OCI-LY7 (cell line): ENCODE measurements at regions of chr10 and their contacts with region 1.

Region 1: GRCh38 chr10:86389441-86390193 is 23.0 kb upstream of the GRID1 start:
- DNase-seq: peak; percentile 85
- H3K4me3 ChIP-seq: peak overlapping the region; percentile 76
- H3K27ac ChIP-seq: peak overlapping the region; percentile 95
- H3K4me1 ChIP-seq: peaks cover 60% of the 10 kb centered on the region
- CTCF ChIP-seq: peak; percentile 61

Region 2: GRCh38 chr10:86366033-86366901 is 23.4 kb before region 1 on chr10 and contains the start of gene GRID1:
- CTCF ChIA-PET with region 1: no interaction called
- POLR2A ChIA-PET with region 1: interaction called, 3 read pairs
- intact Hi-C with region 1: loop called (anchors 2 kb)
- DNase-seq: peak; percentile 55
- H3K4me3 ChIP-seq: peak within 1 kb of the TSS; percentile 62
- H3K27ac ChIP-seq: no peak within 1 kb of the TSS
- H3K4me1 ChIP-seq: peaks cover 3% of the 10 kb centered on the region
- CTCF ChIP-seq: peak; percentile 35; the same call in 1 of the 2 replicates
- total RNA-seq, gene GRID1: 0.75 and 1.6 TPM in 2 replicates

Region 3: DNA sequence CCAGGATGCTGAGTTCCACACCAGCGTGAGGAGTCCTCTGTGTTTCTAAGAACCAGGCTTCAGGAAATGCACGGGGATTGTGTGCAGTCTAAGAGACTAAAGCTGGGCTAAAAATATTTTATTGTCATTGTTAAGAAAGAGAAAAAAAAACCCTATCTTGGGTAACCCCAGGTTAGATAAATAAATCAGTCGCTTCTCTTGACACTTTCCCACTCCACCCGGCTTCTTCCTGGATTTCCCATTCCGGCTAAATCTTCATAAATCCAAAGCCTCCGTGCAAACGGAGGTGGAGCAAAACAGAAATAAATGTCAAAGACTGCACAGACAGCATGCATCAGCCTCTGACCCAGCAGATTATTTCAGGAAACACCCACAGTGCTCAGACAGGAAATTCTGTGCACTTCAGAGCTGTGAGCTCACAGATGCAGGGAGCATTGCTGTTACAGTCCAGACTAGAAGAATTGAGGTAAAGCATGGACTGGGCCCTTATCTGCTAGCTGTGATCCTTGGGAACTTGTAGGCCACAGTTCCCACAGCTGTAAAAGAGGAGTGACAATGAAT is 21.7 kb after region 1 on chr10:
- CTCF ChIA-PET with region 1: interaction called, 8 read pairs
- POLR2A ChIA-PET with region 1: interaction called, 111 read pairs
- intact Hi-C with region 1: loop called (anchors 1 kb)
- DNase-seq: peak; percentile 91
- H3K4me3 ChIP-seq: peak overlapping the region; percentile 53
- H3K27ac ChIP-seq: peak overlapping the region; percentile 95
- H3K4me1 ChIP-seq: peaks cover 69% of the 10 kb centered on the region
- CTCF ChIP-seq: no peak

Region 4: DNA sequence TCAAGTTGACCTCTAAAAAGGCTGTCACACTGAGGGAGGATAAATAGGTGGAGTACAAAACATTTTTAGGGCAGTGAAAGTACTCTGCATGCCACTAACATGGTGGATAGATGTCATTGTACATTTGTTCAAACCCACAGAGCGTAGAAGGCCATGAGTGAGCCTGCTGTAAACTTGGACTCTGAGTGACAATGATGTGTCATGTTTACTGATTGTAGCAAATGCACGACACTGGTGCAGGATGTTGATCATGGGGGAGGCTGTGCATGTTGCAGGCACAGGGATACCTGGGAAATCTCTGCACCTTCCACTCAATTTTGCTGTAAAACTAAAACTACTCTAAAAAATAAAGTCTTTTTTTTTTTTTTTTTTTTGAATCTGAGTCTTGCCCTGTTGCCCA is 29.5 kb after region 1 on chr10:
- CTCF ChIA-PET with region 1: interaction called, 4 read pairs
- POLR2A ChIA-PET with region 1: interaction called, 111 read pairs
- intact Hi-C with region 1: no loop called
- DNase-seq: peak; percentile 51
- H3K4me3 ChIP-seq: no peak overlapping the region
- H3K27ac ChIP-seq: peak overlapping the region; percentile 42
- H3K4me1 ChIP-seq: peaks cover 77% of the 10 kb centered on the region
- CTCF ChIP-seq: no peak

Region 5: DNA sequence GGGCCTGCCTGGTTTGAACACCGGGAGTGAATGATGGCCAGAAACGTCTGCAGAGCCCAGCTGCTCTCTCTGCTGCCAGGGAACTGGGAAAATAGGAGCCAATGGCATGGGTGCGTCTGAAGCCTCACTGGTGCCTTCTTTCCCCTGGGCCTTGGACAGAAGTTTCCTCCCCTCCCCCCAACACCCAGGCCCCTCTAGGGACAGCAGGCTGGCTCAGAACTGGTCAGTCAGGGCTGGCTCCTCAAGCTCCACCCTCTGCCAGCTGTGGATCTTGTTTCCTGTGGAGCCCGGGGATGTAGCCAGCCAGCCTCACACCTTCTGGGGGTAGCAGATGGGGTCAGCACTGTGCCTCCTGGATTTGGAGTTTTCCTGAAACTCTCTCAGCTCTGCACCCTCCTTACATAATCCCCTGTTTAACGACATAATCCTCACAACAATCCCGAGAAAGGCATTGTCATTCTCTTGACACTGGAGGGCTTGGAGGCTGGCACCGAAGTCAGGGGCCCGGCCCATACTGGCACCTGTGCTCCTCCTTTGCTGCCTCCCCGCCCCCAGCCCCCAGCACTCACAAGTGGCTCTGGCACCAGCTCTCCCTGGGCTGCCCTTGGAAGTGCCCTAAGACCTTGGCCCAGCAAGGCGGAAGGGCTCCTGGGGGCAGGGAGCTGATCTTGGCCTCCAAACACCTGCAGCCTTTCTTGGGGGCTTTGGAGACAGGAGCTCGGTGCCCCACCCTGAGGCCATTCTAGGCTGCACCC is 284.4 kb after region 1 on chr10:
- CTCF ChIA-PET with region 1: no interaction called
- POLR2A ChIA-PET with region 1: interaction called, 11 read pairs
- intact Hi-C with region 1: loop called (anchors 5 kb)
- DNase-seq: no peak
- H3K4me3 ChIP-seq: no peak overlapping the region
- H3K27ac ChIP-seq: no peak overlapping the region
- H3K4me1 ChIP-seq: peaks cover 41% of the 10 kb centered on the region
- CTCF ChIP-seq: no peak